Activated CD8-positive, alpha-beta T cell treated with anti-CD3 and anti-CD28 coated beads, Interleukin-2, amount 10 ng/mL, durations not matched to agents 7 days and 5 days (primary cell): ENCODE measurements at regions of chr2 and their contacts with region 1.

Region 1: GRCh38 chr2:47323009-47323821 is 79.7 kb upstream of the MSH2 start:
- DNase-seq: peak; percentile 75
- ATAC-seq: peak; percentile 93
- H3K4me3 Mint-ChIP-seq: no peak overlapping the region
- H3K27ac Mint-ChIP-seq: no peak overlapping the region
- H3K4me1 Mint-ChIP-seq: no peaks in the 10 kb centered on the region
- H3K27me3 Mint-ChIP-seq: peaks cover 17% of the 10 kb centered on the region

Region 2: DNA sequence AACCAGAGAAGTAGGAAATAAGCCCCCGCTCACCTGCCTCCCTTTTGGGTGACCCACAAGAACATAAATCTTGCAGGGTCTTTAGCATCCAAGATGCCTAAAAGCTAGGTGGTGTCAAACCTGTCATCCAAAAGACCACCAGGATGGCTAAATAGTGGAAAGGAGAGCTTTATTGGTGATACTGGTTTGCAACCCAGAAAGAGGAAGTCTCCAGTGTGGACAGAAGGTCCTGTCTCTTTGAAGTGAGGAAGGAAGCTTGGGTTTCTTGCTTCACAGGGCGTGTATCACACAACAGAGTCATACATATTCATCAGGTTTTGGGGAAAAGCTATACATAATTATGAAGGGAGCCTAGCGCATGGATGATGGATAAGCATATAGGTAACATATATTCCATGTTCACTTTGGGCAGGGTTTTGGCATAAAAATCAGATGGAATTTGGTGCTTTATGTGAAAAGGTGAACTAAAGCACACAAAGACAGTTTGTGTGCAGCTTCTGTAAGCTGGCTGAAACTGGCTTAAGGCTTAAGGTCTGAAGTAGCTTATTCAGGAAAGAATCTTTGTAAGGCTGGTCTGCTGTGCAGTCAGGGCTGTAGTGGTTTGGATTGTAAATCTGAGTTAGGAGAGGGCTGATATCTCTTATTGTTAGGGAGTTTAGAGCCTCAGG is 22.5 kb before region 1 on chr2:
- CTCF ChIA-PET with region 1: interaction called, 12 read pairs
- POLR2A ChIA-PET with region 1: no interaction called
- DNase-seq: peak; percentile 28
- ATAC-seq: no peak
- H3K4me3 Mint-ChIP-seq: peak overlapping the region; percentile 23
- H3K27ac Mint-ChIP-seq: no peak overlapping the region
- H3K4me1 Mint-ChIP-seq: peaks cover 14% of the 10 kb centered on the region
- H3K27me3 Mint-ChIP-seq: peaks cover 50% of the 10 kb centered on the region

Region 3: GRCh38 chr2:47309952-47310800 is 13.0 kb before region 1 on chr2:
- CTCF ChIA-PET with region 1: interaction called, 20 read pairs
- POLR2A ChIA-PET with region 1: no interaction called
- DNase-seq: no peak
- ATAC-seq: no peak
- H3K4me3 Mint-ChIP-seq: no peak overlapping the region
- H3K27ac Mint-ChIP-seq: no peak overlapping the region
- H3K4me1 Mint-ChIP-seq: no peaks in the 10 kb centered on the region
- H3K27me3 Mint-ChIP-seq: peaks cover 21% of the 10 kb centered on the region